B cell (primary cell): ENCODE measurements at regions of chr15 and their contacts with region 1.

Region 1: GRCh38 chr15:31435261-31435911 is 108.8 kb downstream of the KLF13 start:
- DNase-seq: peak; percentile 87
- ATAC-seq: peak; percentile 76
- H3K4me3 ChIP-seq: peak overlapping the region; percentile 21 to 67 (median 41)
- H3K4me3 Mint-ChIP-seq: peak overlapping the region; percentile 85
- H3K27ac ChIP-seq: peak overlapping the region; percentile 52 to 86
- H3K27ac Mint-ChIP-seq: peak overlapping the region; percentile 91
- H3K4me1 ChIP-seq: peaks cover 48 to 52% of the 10 kb centered on the region in 2 donors
- H3K4me1 Mint-ChIP-seq: peaks cover 60% of the 10 kb centered on the region
- H3K27me3 ChIP-seq: no peaks in the 10 kb centered on the region
- H3K27me3 Mint-ChIP-seq: no peaks in the 10 kb centered on the region
- CTCF ChIP-seq: peak; percentile 71

Region 2: GRCh38 chr15:31200735-31201151 is 234.6 kb before region 1 on chr15:
- CTCF ChIA-PET with region 1: interaction called, 16 read pairs
- POLR2A ChIA-PET with region 1: no interaction called
- intact Hi-C with region 1: no loop called
- DNase-seq: peak; percentile 63
- ATAC-seq: peak; percentile 69
- H3K4me3 ChIP-seq: no peak overlapping the region
- H3K4me3 Mint-ChIP-seq: no peak overlapping the region
- H3K27ac ChIP-seq: no peak overlapping the region
- H3K27ac Mint-ChIP-seq: no peak overlapping the region
- H3K4me1 ChIP-seq: peaks cover 0 to 4% of the 10 kb centered on the region in 2 donors
- H3K4me1 Mint-ChIP-seq: peaks cover 8% of the 10 kb centered on the region
- H3K27me3 ChIP-seq: peaks cover 0 to 4% (median 2%) of the 10 kb centered on the region in 4 experiments
- H3K27me3 Mint-ChIP-seq: peaks cover 5% of the 10 kb centered on the region
- CTCF ChIP-seq: peak; percentile 26

Region 3: GRCh38 chr15:31228985-31229826 is 206.2 kb before region 1 on chr15:
- CTCF ChIA-PET with region 1: interaction called, 10 read pairs
- POLR2A ChIA-PET with region 1: no interaction called
- intact Hi-C with region 1: no loop called
- DNase-seq: peak; percentile 68
- ATAC-seq: peak; percentile 46
- H3K4me3 ChIP-seq: peak overlapping the region; percentile 19 to 63 (median 43)
- H3K4me3 Mint-ChIP-seq: peak overlapping the region; percentile 89
- H3K27ac ChIP-seq: peak overlapping the region; percentile 11 to 68
- H3K27ac Mint-ChIP-seq: peak overlapping the region; percentile 92
- H3K4me1 ChIP-seq: peaks cover 72 to 86% of the 10 kb centered on the region in 2 donors
- H3K4me1 Mint-ChIP-seq: peaks cover 86% of the 10 kb centered on the region
- H3K27me3 ChIP-seq: no peaks in the 10 kb centered on the region
- H3K27me3 Mint-ChIP-seq: no peaks in the 10 kb centered on the region
- CTCF ChIP-seq: no peak

Region 4: GRCh38 chr15:31326156-31326732 is 109.1 kb before region 1 on chr15:
- CTCF ChIA-PET with region 1: interaction called, 21 read pairs
- POLR2A ChIA-PET with region 1: interaction called, 24 read pairs
- intact Hi-C with region 1: loop called (anchors 1 kb)
- DNase-seq: peak; percentile 100
- ATAC-seq: peak; percentile 70
- H3K4me3 ChIP-seq: peak overlapping the region; percentile 11 to 89 (median 80)
- H3K4me3 Mint-ChIP-seq: peak overlapping the region; percentile 95
- H3K27ac ChIP-seq: peak overlapping the region; percentile 79 to 97
- H3K27ac Mint-ChIP-seq: peak overlapping the region; percentile 99
- H3K4me1 ChIP-seq: peaks cover 49 to 59% of the 10 kb centered on the region in 2 donors
- H3K4me1 Mint-ChIP-seq: peaks cover 62% of the 10 kb centered on the region
- H3K27me3 ChIP-seq: no peaks in the 10 kb centered on the region
- H3K27me3 Mint-ChIP-seq: no peaks in the 10 kb centered on the region
- CTCF ChIP-seq: no peak

Region 5: DNA sequence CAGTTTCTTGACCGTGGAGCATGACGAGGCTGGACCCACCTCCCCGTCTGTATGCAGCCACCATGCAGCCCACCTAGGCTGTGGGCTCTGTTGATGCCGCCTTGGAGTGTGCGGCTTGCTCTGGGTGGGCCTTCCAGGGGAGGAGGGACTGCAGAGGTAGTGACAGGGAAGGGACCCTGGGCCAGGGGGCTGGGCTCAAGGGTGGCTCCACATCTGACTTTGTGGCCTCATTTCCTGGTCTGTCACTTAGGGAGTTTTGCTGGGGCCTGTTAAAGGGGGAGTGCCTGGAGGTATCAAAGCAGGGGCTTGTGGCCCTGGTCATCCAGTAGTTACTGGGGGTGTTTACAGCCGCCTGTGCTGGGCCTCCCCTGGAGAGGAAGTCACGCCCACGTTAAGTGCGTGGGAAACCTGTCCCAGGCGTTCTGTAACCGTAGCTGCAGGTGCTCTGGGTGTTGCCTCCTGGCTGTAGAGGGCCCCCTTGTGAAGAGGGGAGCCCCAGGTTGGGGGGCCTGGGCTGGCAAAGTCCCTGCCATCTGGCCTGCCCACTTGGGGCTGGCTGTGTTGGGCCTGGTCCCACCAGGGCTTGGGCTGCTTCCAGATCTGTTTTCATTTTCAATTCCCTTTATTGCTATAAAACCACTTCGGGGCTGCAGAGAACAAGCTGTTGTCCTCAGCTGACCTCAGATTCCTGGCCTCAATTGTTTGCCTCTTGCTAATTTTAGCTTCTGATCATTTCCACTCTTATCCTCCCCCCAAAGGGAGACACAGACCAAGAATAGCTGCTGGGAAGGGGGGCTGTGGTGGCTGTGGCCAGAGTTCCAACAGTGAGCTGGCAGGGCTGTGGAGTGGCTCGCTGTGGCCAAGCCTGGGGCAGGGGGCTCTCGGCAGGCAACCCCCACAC is 82.2 kb before region 1 on chr15:
- CTCF ChIA-PET with region 1: interaction called, 133 read pairs
- POLR2A ChIA-PET with region 1: interaction called, 10 read pairs
- intact Hi-C with region 1: no loop called
- DNase-seq: peak; percentile 87
- ATAC-seq: peak; percentile 82
- H3K4me3 ChIP-seq: peak overlapping the region in 4 of 5 experiments; percentile 10 to 58 (median 34)
- H3K4me3 Mint-ChIP-seq: peak overlapping the region; percentile 88
- H3K27ac ChIP-seq: peak overlapping the region; percentile 96 to 97
- H3K27ac Mint-ChIP-seq: peak overlapping the region; percentile 96
- H3K4me1 ChIP-seq: peaks cover 99 to 100% of the 10 kb centered on the region in 2 donors
- H3K4me1 Mint-ChIP-seq: peaks cover 97% of the 10 kb centered on the region
- H3K27me3 ChIP-seq: no peaks in the 10 kb centered on the region
- H3K27me3 Mint-ChIP-seq: no peaks in the 10 kb centered on the region
- CTCF ChIP-seq: no peak

Region 6: DNA sequence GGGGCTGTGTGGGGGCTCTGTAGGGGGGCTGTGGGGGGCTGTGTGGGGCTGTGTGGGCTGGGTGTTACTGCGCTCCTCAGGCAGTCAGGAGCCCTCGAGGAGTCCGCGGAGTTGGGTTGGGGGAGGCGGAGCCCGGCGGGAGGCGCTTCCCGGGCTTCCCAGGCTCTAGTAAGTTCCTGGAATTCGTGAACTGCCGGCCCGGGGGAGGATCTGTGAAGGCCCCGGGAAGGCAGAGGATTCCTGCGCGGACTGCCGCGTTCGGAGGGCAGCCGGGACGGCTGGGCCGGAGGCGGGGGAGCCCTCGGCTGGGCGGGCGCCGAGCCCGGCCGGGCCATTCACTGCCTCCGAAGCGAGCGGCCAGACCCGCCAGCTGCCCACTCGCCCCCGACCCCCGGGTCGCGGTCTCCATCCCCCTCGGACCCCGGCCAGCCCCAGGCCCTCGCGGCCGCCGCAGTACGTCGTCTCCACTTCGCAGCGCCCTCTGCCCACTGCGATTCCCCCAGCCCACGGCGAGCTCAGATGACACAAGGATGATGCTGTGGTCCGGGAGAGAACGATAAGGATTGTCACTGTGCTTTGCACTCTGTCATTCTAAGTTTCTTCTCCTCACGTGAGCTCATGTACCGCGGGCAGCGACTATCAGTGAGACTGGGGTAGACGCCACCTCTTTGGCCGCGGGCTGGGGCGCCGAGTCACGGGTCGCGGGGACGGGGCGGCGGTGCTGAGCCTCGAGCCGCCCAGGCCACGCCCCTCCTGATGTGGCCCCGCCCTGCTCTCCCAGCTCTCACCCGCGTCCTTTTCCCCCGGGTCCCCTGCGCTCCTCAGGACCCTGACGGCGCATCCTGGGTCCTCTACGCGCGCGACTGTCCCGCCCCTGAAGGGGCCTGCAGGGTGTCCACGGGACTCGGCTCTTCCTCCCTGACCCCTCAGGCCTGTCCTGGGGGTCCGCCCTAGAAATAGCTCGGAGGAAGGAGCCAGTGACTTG is 43.4 kb before region 1 on chr15:
- CTCF ChIA-PET with region 1: interaction called, 19 read pairs
- POLR2A ChIA-PET with region 1: interaction called, 19 read pairs
- intact Hi-C with region 1: loop called (anchors 1 kb)
- DNase-seq: peak; percentile 86
- ATAC-seq: peak; percentile 92
- H3K4me3 ChIP-seq: peak overlapping the region; percentile 22 to 90 (median 82)
- H3K4me3 Mint-ChIP-seq: peak overlapping the region; percentile 94
- H3K27ac ChIP-seq: peak overlapping the region; percentile 48 to 52
- H3K27ac Mint-ChIP-seq: peak overlapping the region; percentile 89
- H3K4me1 ChIP-seq: peaks cover 3 to 13% of the 10 kb centered on the region in 2 donors
- H3K4me1 Mint-ChIP-seq: peaks cover 17% of the 10 kb centered on the region
- H3K27me3 ChIP-seq: no peaks in the 10 kb centered on the region
- H3K27me3 Mint-ChIP-seq: no peaks in the 10 kb centered on the region
- CTCF ChIP-seq: no peak

Region 7: DNA sequence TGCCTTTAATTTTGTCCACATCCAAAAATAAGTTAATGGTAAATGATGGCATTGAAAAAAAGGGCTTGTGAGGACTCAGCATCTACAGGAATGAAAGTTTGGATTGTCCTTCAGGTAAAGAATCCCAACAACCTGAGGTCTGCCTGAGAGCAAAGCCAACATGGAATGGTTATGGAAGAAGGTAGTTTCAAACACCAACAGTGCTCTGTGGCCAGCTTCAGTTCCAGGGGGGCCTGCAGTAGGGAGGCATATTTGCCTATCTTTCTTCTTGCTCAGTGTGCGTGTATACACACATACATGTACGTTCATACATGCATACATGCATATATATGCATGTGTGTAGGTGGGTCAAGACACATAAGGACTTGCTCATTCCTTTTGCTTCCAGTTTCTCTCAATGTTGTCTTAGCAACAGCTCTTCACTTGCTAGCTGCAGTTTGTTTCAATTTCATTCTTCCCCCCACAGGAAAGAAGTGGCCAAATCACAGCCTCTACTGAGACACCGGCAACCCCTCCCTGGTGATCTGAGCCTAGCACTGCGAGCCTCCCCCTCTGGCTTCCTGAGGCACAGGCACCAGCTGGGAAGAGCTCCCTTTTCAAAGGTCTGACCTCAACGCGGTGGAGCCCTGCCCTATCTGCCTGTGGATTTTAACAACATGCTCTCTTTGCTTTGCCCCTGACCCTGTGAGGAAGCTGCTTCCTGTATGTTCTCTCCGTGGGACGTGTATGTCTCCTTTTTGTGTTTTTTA is 37.4 kb after region 1 on chr15:
- CTCF ChIA-PET with region 1: interaction called, 32 read pairs
- POLR2A ChIA-PET with region 1: interaction called, 8 read pairs
- intact Hi-C with region 1: loop called (anchors 5 kb)
- DNase-seq: peak; percentile 79
- ATAC-seq: peak; percentile 88
- H3K4me3 ChIP-seq: peak overlapping the region in 4 of 5 experiments; percentile 37 to 61 (median 55)
- H3K4me3 Mint-ChIP-seq: peak overlapping the region; percentile 85
- H3K27ac ChIP-seq: peak overlapping the region; percentile 86 to 88
- H3K27ac Mint-ChIP-seq: peak overlapping the region; percentile 92
- H3K4me1 ChIP-seq: peaks cover 30 to 41% of the 10 kb centered on the region in 2 donors
- H3K4me1 Mint-ChIP-seq: peaks cover 51% of the 10 kb centered on the region
- H3K27me3 ChIP-seq: no peaks in the 10 kb centered on the region
- H3K27me3 Mint-ChIP-seq: no peaks in the 10 kb centered on the region
- CTCF ChIP-seq: no peak

Region 8: GRCh38 chr15:31605371-31605931 is 170.1 kb after region 1 on chr15:
- CTCF ChIA-PET with region 1: no interaction called
- POLR2A ChIA-PET with region 1: no interaction called
- intact Hi-C with region 1: no loop called
- DNase-seq: no peak
- ATAC-seq: no peak
- H3K4me3 ChIP-seq: no peak overlapping the region
- H3K4me3 Mint-ChIP-seq: no peak overlapping the region
- H3K27ac ChIP-seq: no peak overlapping the region
- H3K27ac Mint-ChIP-seq: no peak overlapping the region
- H3K4me1 ChIP-seq: no peaks in the 10 kb centered on the region
- H3K4me1 Mint-ChIP-seq: no peaks in the 10 kb centered on the region
- H3K27me3 ChIP-seq: peaks cover 0 to 5% (median 0%) of the 10 kb centered on the region in 4 experiments
- H3K27me3 Mint-ChIP-seq: peaks cover 22% of the 10 kb centered on the region
- CTCF ChIP-seq: no peak

Region 9: DNA sequence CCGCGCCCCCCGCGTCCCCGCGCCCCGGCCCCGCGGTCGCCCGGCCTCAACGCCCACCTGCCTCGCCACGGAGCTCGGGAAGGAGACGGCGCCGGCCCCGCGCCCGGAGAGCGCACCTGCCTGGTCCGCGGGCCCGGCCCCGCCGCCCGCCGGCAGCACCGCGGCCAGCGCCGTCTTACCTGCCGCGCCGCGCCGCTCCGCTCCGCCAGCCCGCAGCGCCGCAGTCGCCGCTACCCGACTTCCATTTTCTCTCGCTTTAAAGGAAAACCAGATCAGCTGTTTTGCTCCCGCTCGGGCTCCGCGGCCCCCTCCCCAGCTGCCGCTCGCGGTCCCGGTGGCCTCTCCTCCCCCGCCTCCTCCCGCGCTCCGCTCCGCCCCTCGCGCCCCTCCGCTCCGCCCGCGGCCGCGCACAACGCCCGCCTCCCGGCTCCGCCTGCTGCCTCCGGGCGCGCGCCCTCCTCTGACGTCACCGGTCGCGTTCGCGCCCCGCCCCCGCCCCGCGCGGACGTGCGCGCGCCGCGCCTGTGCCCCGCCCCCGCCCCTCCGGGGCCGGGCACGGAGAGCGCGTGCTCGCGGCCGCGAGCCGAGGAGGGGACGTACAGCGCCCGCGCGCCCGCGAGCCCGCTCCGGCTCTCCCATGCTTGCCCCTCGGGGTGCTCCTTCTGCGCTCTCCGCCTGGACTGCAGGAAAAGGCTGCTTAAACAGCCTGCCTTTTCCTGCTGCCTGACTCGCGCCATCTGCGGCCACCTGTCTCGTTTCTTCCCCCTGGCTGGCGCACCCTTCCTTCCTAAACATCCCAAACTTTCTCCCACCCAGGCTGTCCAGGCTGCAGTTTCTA is 435.2 kb after region 1 on chr15:
- CTCF ChIA-PET with region 1: no interaction called
- POLR2A ChIA-PET with region 1: no interaction called
- intact Hi-C with region 1: no loop called
- DNase-seq: peak; percentile 90
- ATAC-seq: peak; percentile 90
- H3K4me3 ChIP-seq: peak within 1 kb of the TSS; percentile 21 to 68 (median 57)
- H3K4me3 Mint-ChIP-seq: peak within 1 kb of the TSS; percentile 86
- H3K27ac ChIP-seq: peak within 1 kb of the TSS in 1 of 2 donors; percentile 56
- H3K27ac Mint-ChIP-seq: peak within 1 kb of the TSS; percentile 69
- H3K4me1 ChIP-seq: peaks cover 9 to 11% of the 10 kb centered on the region in 2 donors
- H3K4me1 Mint-ChIP-seq: peaks cover 13% of the 10 kb centered on the region
- H3K27me3 ChIP-seq: peaks cover 0 to 17% (median 13%) of the 10 kb centered on the region in 4 experiments
- H3K27me3 Mint-ChIP-seq: peaks cover 19% of the 10 kb centered on the region
- CTCF ChIP-seq: no peak